ENCODE measurements at regions of chr12 and their contacts with region 1.

Region 1: GRCh38 chr12:63103494-63104131 is 47.4 kb downstream of the AVPR1A start:
- DNase-seq: peak; percentile 65
- ATAC-seq: no peak
- H3K4me3 ChIP-seq: no peak overlapping the region
- H3K27ac ChIP-seq: no peak overlapping the region
- H3K4me1 ChIP-seq: no peaks in the 10 kb centered on the region
- H3K27me3 ChIP-seq: peaks cover 30% of the 10 kb centered on the region
- CTCF ChIP-seq: peak; percentile 93

Region 2: GRCh38 chr12:63276537-63277365 is 173.1 kb after region 1 on chr12:
- CTCF ChIA-PET with region 1: no interaction called
- POLR2A ChIA-PET with region 1: no interaction called
- intact Hi-C with region 1: loop called (anchors 1 kb)
- DNase-seq: peak; percentile 77
- ATAC-seq: peak; percentile 80
- H3K4me3 ChIP-seq: no peak overlapping the region
- H3K27ac ChIP-seq: no peak overlapping the region
- H3K4me1 ChIP-seq: no peaks in the 10 kb centered on the region
- H3K27me3 ChIP-seq: peaks cover 36% of the 10 kb centered on the region
- CTCF ChIP-seq: peak; percentile 94

Region 3: GRCh38 chr12:63668028-63668799 is 564.6 kb after region 1 on chr12 and contains the start of gene DPY19L2:
- CTCF ChIA-PET with region 1: no interaction called
- POLR2A ChIA-PET with region 1: no interaction called
- intact Hi-C with region 1: loop called (anchors 10 kb)
- DNase-seq: peak; percentile 28
- ATAC-seq: peak; percentile 83
- H3K4me3 ChIP-seq: peak within 1 kb of the TSS; percentile 67
- H3K27ac ChIP-seq: no peak within 1 kb of the TSS
- H3K4me1 ChIP-seq: no peaks in the 10 kb centered on the region
- H3K27me3 ChIP-seq: peaks cover 29% of the 10 kb centered on the region
- CTCF ChIP-seq: no peak
- total RNA-seq, gene DPY19L2: 0.33 and 0.98 TPM in 2 replicates

Region 4: DNA sequence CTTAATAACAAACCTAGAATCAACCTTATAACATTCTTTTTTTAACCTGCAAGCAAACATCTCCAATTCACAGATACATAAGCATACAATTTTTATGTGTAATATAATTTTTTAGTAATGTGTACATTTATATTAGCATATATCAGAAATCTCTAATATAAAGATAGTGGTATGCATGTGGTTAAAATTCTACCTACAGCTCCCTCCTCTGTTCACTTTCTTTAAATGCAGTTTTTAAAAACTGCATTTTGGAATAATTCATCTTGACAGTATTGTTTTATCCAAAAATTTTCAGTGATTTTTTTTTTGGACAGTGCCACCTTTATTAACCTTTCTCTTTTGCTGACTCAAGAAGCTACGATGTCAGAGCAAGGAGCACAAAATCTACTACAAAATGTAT is 662.9 kb after region 1 on chr12:
- CTCF ChIA-PET with region 1: no interaction called
- POLR2A ChIA-PET with region 1: no interaction called
- intact Hi-C with region 1: loop called (anchors 10 kb)
- DNase-seq: peak; percentile 34
- ATAC-seq: no peak
- H3K4me3 ChIP-seq: no peak overlapping the region
- H3K27ac ChIP-seq: no peak overlapping the region
- H3K4me1 ChIP-seq: no peaks in the 10 kb centered on the region
- H3K27me3 ChIP-seq: peaks cover 34% of the 10 kb centered on the region
- CTCF ChIP-seq: peak; percentile 56

Region 5: GRCh38 chr12:63802012-63802608 is 698.5 kb after region 1 on chr12:
- CTCF ChIA-PET with region 1: no interaction called
- POLR2A ChIA-PET with region 1: no interaction called
- intact Hi-C with region 1: loop called (anchors 10 kb)
- DNase-seq: peak; percentile 62
- ATAC-seq: no peak
- H3K4me3 ChIP-seq: no peak overlapping the region
- H3K27ac ChIP-seq: no peak overlapping the region
- H3K4me1 ChIP-seq: peaks cover 24% of the 10 kb centered on the region
- H3K27me3 ChIP-seq: no peaks in the 10 kb centered on the region
- CTCF ChIP-seq: peak; percentile 82